Sigmoid colon (tissue), 7 donors: ENCODE measurements at regions of chr9 and their contacts with region 1.

Region 1: DNA sequence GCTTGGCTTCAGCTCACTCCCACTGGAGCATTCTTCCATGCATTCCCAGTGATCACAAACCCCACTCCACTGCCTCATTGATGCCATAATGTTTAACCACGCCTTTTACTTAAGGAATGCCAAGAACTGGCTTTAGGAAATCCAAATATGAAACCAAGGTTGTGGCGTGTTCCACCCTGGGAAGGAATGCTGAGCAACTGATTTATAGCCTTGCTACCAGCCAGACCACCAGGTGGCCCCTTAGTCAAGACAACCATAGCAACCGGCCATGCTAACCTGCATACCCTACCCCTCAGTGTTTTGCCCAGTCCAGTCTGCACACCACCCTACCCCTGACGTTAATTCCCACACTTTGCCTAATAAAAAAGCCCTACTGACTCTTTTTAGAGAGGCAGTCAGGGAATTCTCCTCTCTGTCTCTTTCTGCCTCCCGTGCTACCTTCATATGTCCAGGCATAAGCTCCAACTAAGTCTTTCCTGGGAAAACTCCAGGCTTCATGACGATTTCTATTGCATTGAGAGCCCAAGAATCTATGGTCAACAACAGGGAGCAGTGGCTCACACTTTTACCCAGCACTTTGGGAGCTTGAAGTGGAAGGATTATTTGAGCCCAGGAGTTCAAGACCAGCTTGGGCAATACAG is 27.0 kb upstream of the PRRC2B start:
- DNase-seq: no peak
- H3K4me3 ChIP-seq: no peak overlapping the region
- H3K27ac ChIP-seq: no peak overlapping the region
- H3K4me1 ChIP-seq: no peaks in the 10 kb centered on the region
- H3K27me3 ChIP-seq: no peaks in the 10 kb centered on the region
- CTCF ChIP-seq: no peak
- EP300 ChIP-seq: no peak
- POLR2A ChIP-seq: no peak

Region 2: GRCh38 chr9:131432597-131433306 is 65.9 kb after region 1 on chr9:
- intact Hi-C with region 1: loop called (anchors 5 kb)
- DNase-seq: peak; percentile 39
- H3K4me3 ChIP-seq: no peak overlapping the region
- H3K27ac ChIP-seq: peak overlapping the region; percentile 19 to 77 (median 68)
- H3K4me1 ChIP-seq: peaks cover 0 to 47% (median 40%) of the 10 kb centered on the region in 4 donors
- H3K27me3 ChIP-seq: no peaks in the 10 kb centered on the region
- CTCF ChIP-seq: no peak
- EP300 ChIP-seq: no peak
- POLR2A ChIP-seq: no peak